Activated B cell treated with CpG ODN at 0.5 μM for 24 hours (primary cell): ENCODE measurements at regions of chr2 and their contacts with region 1.

Region 1: DNA sequence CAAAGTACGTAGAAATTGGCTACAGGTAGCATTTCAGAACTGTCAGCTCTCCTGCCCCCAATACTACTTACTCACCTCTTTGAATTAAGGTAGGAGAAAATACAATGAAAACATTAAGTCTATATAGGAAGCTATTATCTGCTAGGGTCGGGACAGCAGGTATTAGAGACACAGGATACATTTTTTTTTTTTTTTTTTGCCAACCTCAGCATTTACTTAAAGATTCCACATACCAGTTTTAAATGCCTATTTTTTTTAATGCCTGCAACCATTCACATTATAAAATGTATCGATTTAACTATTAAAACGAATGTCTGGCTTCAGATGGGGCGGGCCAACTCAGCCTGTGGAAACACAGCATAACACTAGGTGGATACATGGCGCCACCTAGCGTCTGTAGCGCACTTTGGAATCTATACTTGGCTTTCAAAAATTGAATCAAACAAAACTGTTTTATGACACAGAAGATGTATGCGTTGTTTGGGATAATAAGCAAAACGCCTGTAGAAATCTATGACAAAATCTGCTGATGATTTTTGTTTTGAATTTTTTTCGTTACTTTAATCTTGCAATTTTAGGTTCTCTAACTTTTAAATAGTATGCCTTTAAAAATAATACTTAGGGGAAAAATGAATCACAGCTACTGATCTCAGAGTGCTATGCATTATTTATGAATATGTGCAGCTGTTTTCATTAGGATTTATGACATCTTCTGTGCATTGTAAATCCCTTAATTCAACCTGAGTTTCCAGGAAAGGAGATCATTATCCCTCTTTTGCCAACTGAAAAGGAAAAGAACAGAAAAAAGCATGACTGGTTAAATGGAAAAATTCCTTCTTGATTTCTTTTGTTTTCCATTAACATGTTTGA is 261.0 kb downstream of the NYAP2 start:
- DNase-seq: peak; percentile 52
- ATAC-seq: peak; percentile 65
- H3K4me3 Mint-ChIP-seq: no peak overlapping the region
- H3K27ac Mint-ChIP-seq: no peak overlapping the region
- H3K4me1 Mint-ChIP-seq: peaks cover 2% of the 10 kb centered on the region
- H3K27me3 Mint-ChIP-seq: peaks cover 22% of the 10 kb centered on the region
- CTCF ChIP-seq: peak; percentile 91

Region 2: GRCh38 chr2:224802407-224802806 is 858.1 kb before region 1 on chr2:
- CTCF ChIA-PET with region 1: no interaction called
- POLR2A ChIA-PET with region 1: no interaction called
- intact Hi-C with region 1: loop called (anchors 10 kb)
- DNase-seq: no peak
- ATAC-seq: no peak
- H3K4me3 Mint-ChIP-seq: no peak overlapping the region
- H3K27ac Mint-ChIP-seq: no peak overlapping the region
- H3K4me1 Mint-ChIP-seq: no peaks in the 10 kb centered on the region
- H3K27me3 Mint-ChIP-seq: no peaks in the 10 kb centered on the region
- CTCF ChIP-seq: no peak

Region 3: DNA sequence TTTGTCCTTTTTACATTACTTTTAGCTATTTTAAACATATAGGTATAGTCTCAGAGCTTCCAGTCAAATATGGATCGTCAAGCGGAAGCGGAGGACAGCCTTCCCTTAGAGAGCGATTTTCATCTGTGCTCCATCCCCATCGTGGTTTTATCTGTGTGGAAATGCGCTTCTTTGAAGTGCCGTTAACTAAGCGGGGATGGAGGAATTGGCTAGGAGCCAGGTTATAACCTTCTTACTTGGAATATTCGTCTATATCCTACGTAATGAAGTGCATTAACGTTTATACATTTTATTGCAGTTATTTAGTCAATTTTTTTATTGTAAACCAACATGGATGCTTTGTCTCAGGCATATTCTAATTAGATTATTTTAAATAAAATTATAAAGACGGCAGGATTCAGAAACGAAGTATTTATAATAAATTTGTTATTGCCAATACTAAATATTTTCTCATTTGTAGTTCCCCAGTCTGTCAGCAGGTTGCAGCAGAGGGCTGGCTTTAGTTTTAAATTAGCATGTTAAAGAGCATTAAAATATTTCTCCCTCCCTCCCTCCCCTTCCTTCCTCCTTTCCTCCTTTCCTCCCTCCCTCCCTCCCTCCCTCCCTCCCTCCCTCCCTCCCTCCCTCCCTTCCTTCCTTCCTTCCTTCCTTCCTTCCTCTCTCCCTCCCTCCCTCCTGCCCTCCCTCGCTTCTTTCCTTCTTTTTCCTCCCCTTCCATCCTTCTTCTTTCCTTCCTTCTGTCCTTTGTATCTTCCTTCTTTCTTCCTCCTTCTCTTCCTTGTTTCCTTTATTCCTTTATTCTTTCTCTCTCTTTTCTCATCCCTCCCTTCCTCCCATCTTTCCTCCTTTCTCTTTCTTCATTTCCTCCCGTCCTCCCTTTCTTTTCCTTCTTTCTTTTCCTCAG is 537.7 kb before region 1 on chr2:
- CTCF ChIA-PET with region 1: interaction called, 12 read pairs
- POLR2A ChIA-PET with region 1: no interaction called
- intact Hi-C with region 1: loop called (anchors 1 kb)
- DNase-seq: no peak
- ATAC-seq: no peak
- H3K4me3 Mint-ChIP-seq: no peak overlapping the region
- H3K27ac Mint-ChIP-seq: no peak overlapping the region
- H3K4me1 Mint-ChIP-seq: no peaks in the 10 kb centered on the region
- H3K27me3 Mint-ChIP-seq: peaks cover 6% of the 10 kb centered on the region
- CTCF ChIP-seq: no peak

Region 4: DNA sequence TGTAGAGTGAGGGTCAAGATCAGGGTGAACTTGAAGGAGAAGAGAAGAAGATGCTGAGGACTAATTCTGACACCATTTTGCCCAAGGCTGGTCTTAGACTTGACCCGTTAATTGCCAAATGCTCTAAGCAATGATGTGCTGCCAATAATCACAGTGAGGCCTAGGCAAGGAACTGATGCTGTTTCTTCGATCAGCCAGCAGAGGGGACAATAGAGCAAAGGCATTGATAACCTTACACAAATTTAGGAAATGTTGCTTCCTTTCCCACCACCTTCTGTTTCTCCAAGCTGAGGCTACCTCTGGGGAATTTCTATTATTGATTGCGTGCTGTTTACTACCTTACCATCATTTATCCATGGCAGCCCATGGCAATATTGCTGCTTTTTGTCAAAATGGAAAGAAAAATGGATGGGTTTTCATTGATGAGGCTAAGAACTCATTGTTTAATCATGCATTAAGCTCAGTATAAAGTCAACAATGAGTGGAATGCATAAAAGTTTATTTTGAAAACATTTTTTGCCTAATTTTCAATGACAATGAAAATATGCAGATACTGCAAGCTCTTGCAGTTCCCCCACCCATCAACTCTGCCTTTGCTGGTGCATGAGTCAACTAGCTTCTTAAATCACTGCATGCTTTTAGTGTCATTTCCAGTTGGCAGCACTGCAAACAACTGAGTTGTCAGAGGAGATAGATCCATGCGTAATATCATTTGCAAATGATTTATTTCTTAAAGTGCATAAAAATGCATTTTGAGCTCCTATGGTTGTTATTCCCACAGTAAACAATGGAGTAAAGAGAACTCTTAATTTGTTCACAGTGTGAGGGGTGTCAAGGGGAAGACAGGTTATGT is 377.4 kb before region 1 on chr2:
- CTCF ChIA-PET with region 1: interaction called, 31 read pairs
- POLR2A ChIA-PET with region 1: no interaction called
- intact Hi-C with region 1: loop called (anchors 1 kb)
- DNase-seq: no peak
- ATAC-seq: peak; percentile 61
- H3K4me3 Mint-ChIP-seq: no peak overlapping the region
- H3K27ac Mint-ChIP-seq: no peak overlapping the region
- H3K4me1 Mint-ChIP-seq: no peaks in the 10 kb centered on the region
- H3K27me3 Mint-ChIP-seq: no peaks in the 10 kb centered on the region
- CTCF ChIP-seq: no peak

Region 5: GRCh38 chr2:225615527-225615926 is 45.0 kb before region 1 on chr2:
- CTCF ChIA-PET with region 1: no interaction called
- POLR2A ChIA-PET with region 1: no interaction called
- intact Hi-C with region 1: no loop called
- DNase-seq: no peak
- ATAC-seq: no peak
- H3K4me3 Mint-ChIP-seq: no peak overlapping the region
- H3K27ac Mint-ChIP-seq: no peak overlapping the region
- H3K4me1 Mint-ChIP-seq: no peaks in the 10 kb centered on the region
- H3K27me3 Mint-ChIP-seq: peaks cover 2% of the 10 kb centered on the region
- CTCF ChIP-seq: no peak

Region 6: DNA sequence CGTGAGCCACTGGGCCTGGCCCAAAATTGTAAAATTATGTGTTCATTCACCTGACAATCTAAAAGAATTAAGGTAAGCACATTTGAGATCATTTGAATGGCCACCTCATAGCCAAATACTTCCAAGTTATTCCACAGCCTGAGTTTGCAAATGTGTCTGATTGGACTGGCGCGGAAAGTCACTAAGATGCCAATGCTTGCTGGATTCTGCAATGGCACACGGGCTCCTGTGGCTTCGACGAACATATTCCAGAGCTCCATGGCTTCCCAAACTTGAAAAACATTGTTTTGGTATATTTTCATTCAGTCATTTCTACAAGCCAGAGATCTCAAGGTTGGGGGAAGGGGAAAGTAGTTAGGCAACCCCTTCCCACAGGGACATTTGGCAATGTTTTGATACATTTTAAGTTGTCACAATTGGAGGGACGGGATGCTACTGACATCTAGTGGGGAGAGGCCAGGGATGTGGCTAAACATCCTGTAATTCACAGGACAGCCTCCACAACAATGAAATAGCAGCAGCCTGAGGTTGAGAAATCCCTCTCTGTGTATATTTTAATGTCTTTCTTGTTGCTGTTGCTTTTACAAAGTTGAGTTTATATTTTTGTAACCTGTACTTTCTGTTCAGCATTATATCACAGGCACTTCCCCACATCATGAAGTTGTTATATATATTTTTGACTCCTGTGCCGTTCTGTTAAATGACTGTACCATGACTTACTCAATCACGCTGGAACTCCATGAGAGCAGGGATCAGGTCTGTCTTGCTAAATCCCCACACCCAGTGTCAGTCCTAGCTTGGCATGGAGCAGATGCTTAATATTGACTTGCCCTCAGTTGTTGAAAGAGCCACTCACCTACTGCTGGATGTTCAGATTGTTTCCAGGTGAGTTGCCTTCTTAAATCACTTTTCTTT is 1446.6 kb after region 1 on chr2:
- CTCF ChIA-PET with region 1: interaction called, 3 read pairs
- POLR2A ChIA-PET with region 1: interaction called, 12 read pairs
- intact Hi-C with region 1: no loop called
- DNase-seq: no peak
- ATAC-seq: no peak
- H3K4me3 Mint-ChIP-seq: no peak overlapping the region
- H3K27ac Mint-ChIP-seq: no peak overlapping the region
- H3K4me1 Mint-ChIP-seq: no peaks in the 10 kb centered on the region
- H3K27me3 Mint-ChIP-seq: no peaks in the 10 kb centered on the region
- CTCF ChIP-seq: no peak